ENCODE measurements at regions of chr10 and their contacts with region 1.

Region 1: GRCh38 chr10:73785221-73785720 is at the start of gene ZSWIM8:
- DNase-seq: peak; percentile 88 to 93 (median 89)
- H3K4me3 ChIP-seq: peak within 1 kb of the TSS; percentile 87 to 98 (median 90)
- H3K4me3 Mint-ChIP-seq: peak within 1 kb of the TSS; percentile 97 to 98
- H3K27ac ChIP-seq: peak within 1 kb of the TSS; percentile 64 to 76
- H3K27ac Mint-ChIP-seq: peak within 1 kb of the TSS; percentile 96 to 100 (median 99)
- H3K4me1 ChIP-seq: peaks cover 40 to 47% of the 10 kb centered on the region in 2 donors
- H3K4me1 Mint-ChIP-seq: peaks cover 34% of the 10 kb centered on the region
- H3K27me3 ChIP-seq: no peaks in the 10 kb centered on the region
- H3K27me3 Mint-ChIP-seq: no peaks in the 10 kb centered on the region
- CTCF ChIP-seq: no peak
- polyA plus RNA-seq, gene ZSWIM8: 7.8 to 150 (median 19.2) TPM

Region 2: DNA sequence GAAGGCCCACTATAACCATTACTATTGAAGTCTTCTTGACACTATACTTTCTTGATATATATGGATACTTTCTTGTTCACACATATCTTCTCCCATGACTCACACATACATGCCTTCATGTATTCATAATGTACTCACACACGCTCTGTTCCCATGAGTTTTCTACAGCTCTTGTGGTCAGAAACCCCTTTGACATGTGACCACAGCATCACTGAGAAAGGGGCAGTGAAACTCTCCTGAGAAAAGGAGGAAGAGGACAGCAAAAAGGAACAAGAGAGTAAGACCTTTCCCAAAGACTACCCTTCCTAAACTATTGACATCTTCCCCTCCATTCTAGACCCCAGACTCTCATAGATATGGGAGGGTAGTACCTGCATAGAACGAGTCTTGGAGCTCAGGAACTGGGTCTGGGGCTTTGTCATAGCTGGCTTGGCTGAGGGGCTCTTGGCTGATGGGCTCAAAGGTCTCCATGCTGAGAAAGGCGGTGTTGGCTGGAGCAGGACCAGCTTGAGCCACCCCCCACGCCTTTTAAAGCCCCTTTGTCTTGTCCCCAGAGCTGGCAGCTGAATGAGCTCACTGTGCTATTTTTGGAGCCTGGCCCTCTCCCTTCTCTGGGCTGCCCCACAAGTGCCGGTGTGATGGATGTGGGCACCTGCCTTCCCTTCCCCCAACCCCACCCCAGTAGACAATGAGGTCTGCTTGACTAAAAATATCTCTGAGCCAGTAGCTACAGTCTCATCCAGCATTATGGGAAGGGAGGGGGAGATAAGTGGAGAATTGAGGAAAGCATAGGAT is 134.5 kb before region 1 on chr10:
- intact Hi-C with region 1: no loop called
- DNase-seq: peak; percentile 69 to 95 (median 72)
- H3K4me3 ChIP-seq: no peak overlapping the region
- H3K4me3 Mint-ChIP-seq: peak overlapping the region in 1 of 2 donors; percentile 8
- H3K27ac ChIP-seq: peak overlapping the region; percentile 40 to 61
- H3K27ac Mint-ChIP-seq: peak overlapping the region in 5 of 7 donors; percentile 43 to 83 (median 81)
- H3K4me1 ChIP-seq: peaks cover 31 to 36% of the 10 kb centered on the region in 2 donors
- H3K4me1 Mint-ChIP-seq: peaks cover 43% of the 10 kb centered on the region
- H3K27me3 ChIP-seq: no peaks in the 10 kb centered on the region
- H3K27me3 Mint-ChIP-seq: peaks cover 0 to 15% (median 8%) of the 10 kb centered on the region in 3 donors
- CTCF ChIP-seq: no peak

Region 3: GRCh38 chr10:73743905-73744663 is 41.2 kb before region 1 on chr10 and contains the start of gene SEC24C:
- intact Hi-C with region 1: loop called (anchors 5 kb)
- DNase-seq: peak; percentile 94 to 97 (median 97)
- H3K4me3 ChIP-seq: peak within 1 kb of the TSS; percentile 72 to 94 (median 93)
- H3K4me3 Mint-ChIP-seq: peak within 1 kb of the TSS; percentile 99
- H3K27ac ChIP-seq: peak within 1 kb of the TSS; percentile 91 to 95
- H3K27ac Mint-ChIP-seq: peak within 1 kb of the TSS; percentile 99 to 100 (median 100)
- H3K4me1 ChIP-seq: peaks cover 21 to 27% of the 10 kb centered on the region in 2 donors
- H3K4me1 Mint-ChIP-seq: peaks cover 28% of the 10 kb centered on the region
- H3K27me3 ChIP-seq: no peaks in the 10 kb centered on the region
- H3K27me3 Mint-ChIP-seq: no peaks in the 10 kb centered on the region
- CTCF ChIP-seq: no peak
- polyA plus RNA-seq, gene SEC24C: 25.7 to 65.8 (median 44.8) TPM

Region 4: DNA sequence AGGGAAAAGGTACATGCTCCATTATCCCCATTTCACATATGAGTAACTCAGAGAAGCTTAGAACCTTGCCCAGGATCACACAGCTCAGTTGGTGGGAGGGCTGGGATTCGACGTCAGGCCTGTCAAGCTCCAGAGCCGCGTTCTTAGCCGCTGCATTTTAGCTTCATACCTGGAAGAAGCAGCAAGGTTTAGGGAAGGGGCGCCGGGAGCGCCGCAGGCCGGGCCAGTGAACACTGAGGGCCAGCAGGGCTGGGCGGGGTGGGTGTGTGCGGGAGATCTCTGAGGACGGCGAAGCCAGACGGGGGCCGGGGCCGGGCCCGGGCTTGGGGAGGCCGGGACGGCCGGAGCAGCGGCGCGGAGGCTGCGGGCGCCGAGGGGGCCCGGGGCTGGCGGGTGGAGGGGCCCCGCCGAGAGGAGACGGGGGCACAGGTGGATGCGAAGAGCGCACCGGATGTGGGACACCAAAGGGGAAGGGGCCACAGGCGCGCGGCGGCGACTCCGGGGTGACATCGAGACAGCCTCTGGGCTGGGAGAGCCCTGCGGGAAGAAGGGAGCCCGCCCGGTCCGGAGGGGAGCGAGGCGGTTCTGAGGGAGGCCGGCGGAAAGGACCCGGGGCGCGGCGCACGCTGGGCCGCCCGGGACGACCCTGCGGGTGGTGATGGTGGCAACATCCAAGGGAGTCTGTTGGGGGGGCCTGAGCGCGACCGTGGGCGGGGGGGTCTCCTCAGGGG is 25.6 kb after region 1 on chr10:
- intact Hi-C with region 1: loop called in 1 of 2 experiments (anchors 2 kb)
- DNase-seq: peak in 2 of 3 donors; percentile 16 to 40
- H3K4me3 ChIP-seq: peak overlapping the region; percentile 69 to 93 (median 72)
- H3K4me3 Mint-ChIP-seq: peak overlapping the region; percentile 90 to 94
- H3K27ac ChIP-seq: peak overlapping the region; percentile 81 to 91
- H3K27ac Mint-ChIP-seq: peak overlapping the region; percentile 92 to 97 (median 93)
- H3K4me1 ChIP-seq: peaks cover 27 to 31% of the 10 kb centered on the region in 2 donors
- H3K4me1 Mint-ChIP-seq: peaks cover 39% of the 10 kb centered on the region
- H3K27me3 ChIP-seq: no peaks in the 10 kb centered on the region
- H3K27me3 Mint-ChIP-seq: no peaks in the 10 kb centered on the region
- CTCF ChIP-seq: no peak